GM10248 (cell line): ENCODE measurements at regions of chr9 and their contacts with region 1.

Region 1: DNA sequence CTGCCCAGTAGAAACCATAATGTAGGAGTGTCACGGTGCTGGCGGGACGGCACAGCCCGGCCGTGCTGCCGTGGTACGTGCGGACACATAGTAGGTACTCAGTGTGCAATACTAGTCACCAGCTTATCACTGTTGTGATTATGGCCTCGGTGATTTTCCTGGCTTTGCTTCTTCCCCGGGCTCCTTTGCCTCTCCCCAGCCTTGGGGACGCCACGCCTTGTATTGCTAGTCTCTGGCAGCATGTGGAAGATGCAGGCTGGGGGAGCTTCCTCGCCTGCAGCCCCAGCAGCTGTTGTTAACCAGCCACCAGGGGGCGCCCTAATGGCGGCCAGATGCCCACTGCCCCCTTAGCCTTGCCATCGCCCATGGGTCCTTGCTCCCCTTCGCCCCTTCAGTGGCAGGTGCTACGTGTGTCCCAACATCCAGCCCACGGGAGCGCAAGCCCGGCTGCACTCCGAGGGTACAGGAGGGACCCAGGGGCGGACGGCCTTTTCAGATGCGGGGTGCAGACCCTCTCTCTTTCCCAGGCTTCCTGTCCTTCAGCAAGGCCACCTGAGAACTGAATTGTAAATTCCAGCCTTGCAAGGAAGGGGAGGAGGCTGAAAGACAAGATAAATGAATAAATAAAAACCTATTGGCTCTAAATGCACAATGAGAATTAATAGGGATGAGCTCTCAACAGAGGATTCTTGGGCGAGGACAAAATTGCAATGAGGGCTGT is 8.0 kb downstream of the NTNG2 start:
- DNase-seq: peak; percentile 80
- CTCF ChIP-seq: peak; percentile 84

Region 2: GRCh38 chr9:131707733-131708157 is 462.1 kb before region 1 on chr9:
- CTCF ChIA-PET with region 1: no interaction called
- POLR2A ChIA-PET with region 1: no interaction called
- DNase-seq: no peak
- CTCF ChIP-seq: no peak

Region 3: GRCh38 chr9:132135456-132135855 is 34.4 kb before region 1 on chr9:
- CTCF ChIA-PET with region 1: interaction called, 10 read pairs
- POLR2A ChIA-PET with region 1: no interaction called
- DNase-seq: no peak
- CTCF ChIP-seq: no peak

Region 4: GRCh38 chr9:132150256-132150655 is 19.6 kb before region 1 on chr9:
- CTCF ChIA-PET with region 1: interaction called, 14 read pairs
- POLR2A ChIA-PET with region 1: no interaction called
- DNase-seq: no peak
- CTCF ChIP-seq: no peak

Region 5: DNA sequence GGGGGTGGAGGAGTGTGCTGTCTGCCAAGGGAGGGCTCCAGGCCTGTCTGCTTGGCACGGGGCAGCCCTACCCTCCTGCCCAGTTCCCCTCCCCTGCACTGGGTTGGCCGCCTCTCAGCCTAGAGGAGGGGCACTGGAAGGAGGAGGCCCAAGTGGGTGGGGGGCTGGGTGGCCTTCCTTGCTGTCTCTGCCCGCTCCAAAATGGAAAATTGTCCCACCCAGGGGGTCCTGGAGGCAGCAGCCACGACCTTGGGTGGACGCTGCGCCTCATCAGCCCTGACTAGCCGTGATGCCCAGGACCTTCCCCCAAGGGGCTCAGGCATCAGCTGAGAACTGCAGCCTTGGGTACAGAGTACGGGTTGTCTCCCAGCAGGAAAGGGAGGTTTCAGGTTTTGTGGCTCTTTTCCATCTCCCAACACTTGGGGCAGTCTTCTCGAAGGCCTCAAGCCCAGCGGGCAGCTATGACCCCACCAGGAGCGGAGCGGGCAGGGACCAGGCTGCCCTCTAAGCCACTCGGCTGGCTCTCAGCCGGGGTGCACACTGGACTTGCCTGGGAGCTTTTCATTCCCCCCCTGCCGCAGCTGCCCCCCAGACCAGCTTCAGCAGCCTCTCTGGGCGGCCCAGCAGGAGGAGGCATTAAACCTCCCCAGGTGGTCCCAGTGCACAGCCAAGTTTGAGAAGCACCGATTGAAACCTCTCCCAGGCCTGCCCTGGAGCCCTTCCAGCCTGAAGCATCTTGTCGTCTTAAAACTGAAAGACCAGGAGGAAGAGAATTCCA is 12.7 kb after region 1 on chr9:
- CTCF ChIA-PET with region 1: interaction called, 37 read pairs
- POLR2A ChIA-PET with region 1: no interaction called
- DNase-seq: no peak
- CTCF ChIP-seq: no peak

Region 6: DNA sequence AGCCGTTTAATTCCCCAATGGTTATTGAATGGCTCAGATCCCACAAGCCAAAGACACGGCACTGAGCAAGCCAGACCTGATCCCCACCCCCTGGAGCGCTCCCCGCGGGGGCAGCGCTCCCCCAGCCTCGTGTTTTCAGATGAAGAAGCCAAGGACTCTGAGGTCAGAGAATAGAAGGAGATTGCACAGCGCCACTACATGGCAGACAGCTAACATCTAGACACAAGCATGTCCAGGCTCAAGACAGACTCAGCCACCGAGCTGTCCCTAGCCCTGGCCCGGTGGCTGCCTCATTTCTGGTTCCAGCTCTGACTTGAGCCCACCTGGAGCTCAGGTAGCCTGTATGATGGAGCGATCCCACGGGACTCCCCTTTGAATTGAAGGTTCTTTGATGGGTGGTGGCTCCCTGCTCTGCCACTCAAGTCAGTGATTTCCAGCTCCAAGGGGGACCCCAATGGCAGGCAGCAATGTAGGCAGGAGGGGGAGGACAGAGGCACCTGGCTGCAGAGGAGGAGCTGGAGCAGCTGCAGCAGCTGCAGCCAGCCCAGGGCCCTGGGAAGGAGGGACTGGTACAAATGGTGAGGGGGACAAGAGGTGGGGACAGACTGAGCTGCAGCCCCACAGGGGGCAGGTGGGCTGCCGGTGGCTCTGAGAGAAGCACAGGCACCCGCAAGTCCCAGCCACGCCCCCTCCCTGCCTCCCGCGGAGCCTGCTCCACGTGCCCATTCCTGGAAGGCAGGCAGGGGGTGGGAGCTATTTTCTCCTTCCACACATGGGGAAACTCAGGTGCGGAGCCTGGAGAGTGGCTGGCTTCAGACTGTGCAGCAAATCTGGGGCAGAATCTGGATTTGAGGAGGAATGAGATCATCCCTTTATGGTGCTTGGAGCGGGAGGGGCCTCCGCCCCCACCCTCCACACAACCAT is 32.2 kb after region 1 on chr9:
- CTCF ChIA-PET with region 1: interaction called, 10 read pairs
- POLR2A ChIA-PET with region 1: no interaction called
- DNase-seq: no peak
- CTCF ChIP-seq: no peak

Region 7: GRCh38 chr9:132240753-132241493 is 71.1 kb after region 1 on chr9:
- CTCF ChIA-PET with region 1: interaction called, 90 read pairs
- POLR2A ChIA-PET with region 1: no interaction called
- DNase-seq: peak; percentile 99
- CTCF ChIP-seq: no peak

Region 8: GRCh38 chr9:132249123-132249522 is 79.3 kb after region 1 on chr9:
- CTCF ChIA-PET with region 1: interaction called, 27 read pairs
- POLR2A ChIA-PET with region 1: no interaction called
- DNase-seq: no peak
- CTCF ChIP-seq: no peak

Region 9: DNA sequence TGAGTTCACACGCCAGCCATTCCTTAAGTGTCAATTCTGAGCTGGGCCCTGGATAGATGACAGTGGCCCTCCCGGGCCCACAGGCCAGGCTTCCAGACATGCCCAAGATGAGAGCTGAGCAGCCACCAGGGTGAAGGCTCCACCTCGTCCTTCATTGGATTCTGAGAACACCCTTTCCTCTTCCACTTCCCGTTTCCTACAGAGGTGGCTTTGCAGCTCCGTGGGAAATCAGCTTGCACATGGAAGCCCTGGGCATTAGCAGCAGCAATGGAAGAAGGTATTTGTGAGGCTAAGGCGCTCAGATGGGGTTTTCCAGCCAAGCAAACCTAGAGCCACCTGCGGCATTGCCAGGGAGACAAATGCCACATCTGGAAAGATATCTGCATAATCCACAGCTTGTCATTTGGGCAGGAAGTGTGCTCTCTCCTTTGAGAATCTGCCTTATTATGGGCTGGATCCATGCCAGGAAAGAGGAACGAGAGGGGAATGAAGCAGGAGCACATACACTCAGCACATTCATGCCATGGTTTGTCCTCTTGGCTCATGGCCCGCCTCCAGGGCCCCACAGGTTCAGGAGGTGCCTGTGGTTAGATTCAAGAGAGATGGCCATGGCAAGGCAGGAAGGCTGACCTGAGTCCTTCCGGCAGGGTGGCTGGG is 274.2 kb after region 1 on chr9:
- CTCF ChIA-PET with region 1: no interaction called
- POLR2A ChIA-PET with region 1: no interaction called
- DNase-seq: no peak
- CTCF ChIP-seq: no peak

Region 10: GRCh38 chr9:132582276-132582785 is 412.5 kb after region 1 on chr9 and contains the start of gene BARHL1:
- CTCF ChIA-PET with region 1: no interaction called
- POLR2A ChIA-PET with region 1: no interaction called
- DNase-seq: no peak
- CTCF ChIP-seq: no peak